H1 (cell line): ENCODE measurements at regions of chr22 and their contacts with region 1.

Region 1: GRCh38 chr22:31337161-31337560 is 9.0 kb downstream of the PATZ1 start:
- DNase-seq: no peak
- H3K4me3 ChIP-seq: no peak overlapping the region
- H3K27ac ChIP-seq: no peak overlapping the region
- H3K4me1 ChIP-seq: peaks cover 0 to 25% (median 13%) of the 10 kb centered on the region in 4 experiments; a peak in 6 of 7 replicates
- H3K27me3 ChIP-seq: no peaks in the 10 kb centered on the region
- CTCF ChIP-seq: no peak
- EP300 ChIP-seq: no peak
- POLR2A ChIP-seq: no peak
- RAD21 ChIP-seq: no peak

Region 2: GRCh38 chr22:31321421-31321820 is 15.7 kb before region 1 on chr22:
- CTCF ChIA-PET with region 1: interaction called, 5 read pairs
- POLR2A ChIA-PET with region 1: interaction called, 116 read pairs
- DNase-seq: no peak
- H3K4me3 ChIP-seq: no peak overlapping the region
- H3K27ac ChIP-seq: no peak overlapping the region
- H3K4me1 ChIP-seq: no peaks in the 10 kb centered on the region
- H3K27me3 ChIP-seq: no peaks in the 10 kb centered on the region
- CTCF ChIP-seq: no peak
- EP300 ChIP-seq: no peak
- POLR2A ChIP-seq: no peak
- RAD21 ChIP-seq: no peak